Right ventricle myocardium inferior (tissue), 1 donor: ENCODE measurements at regions of chr6 and their contacts with region 1.

Region 1: DNA sequence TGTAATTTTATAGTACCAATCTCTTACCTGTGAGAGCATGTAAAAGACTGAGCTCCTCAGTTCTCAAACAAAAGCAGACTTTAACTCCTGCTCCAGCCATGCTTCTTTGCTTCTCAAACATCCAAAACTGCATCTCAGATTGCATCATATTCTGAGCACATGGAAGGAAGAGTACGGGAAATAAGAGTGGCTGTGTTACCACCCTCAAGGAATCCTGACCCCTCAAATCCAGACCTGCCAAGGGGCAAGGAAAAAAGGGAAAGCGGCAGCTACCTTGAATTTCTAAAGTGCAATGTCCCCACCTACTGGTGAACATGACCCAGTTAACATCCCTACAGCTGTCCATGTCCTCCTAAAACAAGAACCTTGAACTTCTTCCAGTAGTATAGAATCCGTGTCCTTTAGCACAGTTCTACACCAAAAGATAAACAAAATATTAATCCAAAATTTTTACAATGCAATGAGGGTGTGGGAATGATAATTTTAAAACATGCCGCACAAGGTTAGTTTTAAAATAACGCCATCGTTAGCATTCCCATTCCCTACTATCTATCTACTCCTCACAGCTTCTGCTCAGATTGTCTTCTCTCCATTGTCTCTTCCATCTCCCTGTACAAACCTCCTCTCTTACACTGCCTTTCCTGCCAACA is 34.1 kb upstream of the HLA-DQB1 start:
- DNase-seq: no peak
- ATAC-seq: peak; percentile 68

Region 2: DNA sequence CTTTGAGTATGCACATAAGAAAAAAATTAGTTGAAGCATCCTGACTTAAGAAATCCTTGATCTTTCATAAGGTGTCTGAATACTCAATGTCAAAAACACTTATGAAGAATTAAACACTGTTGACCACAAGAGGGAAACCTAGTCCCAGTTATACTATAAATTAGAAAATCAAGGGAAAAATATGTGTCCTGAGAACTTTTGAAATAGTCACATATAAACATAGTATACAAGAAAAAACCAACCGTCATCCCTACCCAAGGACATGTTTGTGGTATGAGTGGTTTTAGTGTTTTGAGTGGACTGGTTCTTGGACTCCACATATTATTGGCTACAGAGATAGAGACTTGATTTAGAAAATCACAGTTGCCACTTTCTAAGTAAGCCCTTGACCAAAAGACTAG is 268.5 kb before region 1 on chr6:
- intact Hi-C with region 1: loop called (anchors 1 kb)
- DNase-seq: no peak
- ATAC-seq: no peak

Region 3: DNA sequence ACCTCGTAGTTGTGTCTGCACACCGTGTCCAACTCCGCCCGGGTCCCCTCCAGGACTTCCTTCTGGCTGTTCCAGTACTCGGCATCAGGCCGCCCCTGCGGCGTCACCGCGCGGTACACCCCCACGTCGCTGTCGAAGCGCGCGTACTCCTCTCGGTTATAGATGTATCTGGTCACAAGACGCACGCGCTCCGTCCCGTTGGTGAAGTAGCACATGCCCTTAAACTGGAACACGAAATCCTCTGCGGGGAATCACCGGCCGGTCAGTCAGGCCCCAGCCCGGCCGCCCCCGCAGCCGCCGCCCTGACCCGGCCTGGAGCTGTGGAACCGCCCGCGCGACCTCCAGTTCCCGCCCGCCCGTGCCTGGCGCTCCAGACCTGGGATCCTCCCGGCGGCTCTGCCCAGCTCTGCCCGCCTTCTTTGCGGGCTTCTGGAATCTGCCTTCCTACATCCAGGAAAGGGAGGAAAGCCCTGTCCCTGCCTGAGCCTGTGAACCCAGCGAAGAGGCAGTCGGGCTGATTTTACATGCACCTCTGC is 35.6 kb before region 1 on chr6:
- intact Hi-C with region 1: no loop called
- DNase-seq: peak; percentile 70
- ATAC-seq: peak; percentile 68

Region 4: GRCh38 chr6:32853541-32854375 is 153.2 kb after region 1 on chr6 and contains the starts of genes PSMB9 and TAP1:
- intact Hi-C with region 1: no loop called
- DNase-seq: peak; percentile 98
- ATAC-seq: peak; percentile 97
- total RNA-seq, gene PSMB9: 13.4 TPM
- total RNA-seq, gene TAP1: 19.1 TPM